ENCODE measurements at regions of chr1 and their contacts with region 1.

Region 1: GRCh38 chr1:157193702-157194391 is 55.7 kb upstream of the ETV3 start:
- DNase-seq: peak; percentile 59
- ATAC-seq: no peak

Region 2: DNA sequence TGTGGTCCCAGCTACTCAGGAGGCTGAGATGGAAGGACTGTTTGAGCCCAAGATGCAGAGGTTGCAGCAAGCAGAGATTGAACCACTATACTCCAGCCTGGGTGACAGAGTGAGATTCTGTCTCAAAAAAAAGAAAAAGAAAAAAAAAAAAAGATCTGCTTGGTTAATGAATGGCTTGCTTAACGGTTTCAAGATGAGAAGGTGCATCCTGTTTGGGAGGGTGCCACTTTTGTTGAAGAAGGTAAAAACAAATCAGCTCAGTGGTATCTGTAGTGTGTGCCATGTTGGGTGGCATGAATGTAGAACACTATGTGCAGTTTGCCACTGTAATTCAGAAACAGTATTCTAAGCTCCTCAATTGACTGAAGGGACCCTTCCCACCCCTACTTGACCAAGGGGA is 39.3 kb after region 1 on chr1:
- intact Hi-C with region 1: no loop called
- DNase-seq: no peak
- ATAC-seq: no peak

Region 3: GRCh38 chr1:157369808-157370521 is 176.1 kb after region 1 on chr1:
- intact Hi-C with region 1: loop called in 1 of 2 experiments (anchors 10 kb)
- DNase-seq: no peak
- ATAC-seq: peak; percentile 68 to 78